Endothelial cell of umbilical vein (primary cell): ENCODE measurements at regions of chr6 and their contacts with region 1.

Region 1: GRCh38 chr6:37819177-37819823 is at the start of gene ZFAND3:
- DNase-seq: peak; percentile 95
- H3K4me3 ChIP-seq: peak within 1 kb of the TSS; percentile 88 to 92 (median 90)
- H3K27ac ChIP-seq: peak within 1 kb of the TSS; percentile 96
- H3K4me1 ChIP-seq: peaks cover 33% of the 10 kb centered on the region
- H3K27me3 ChIP-seq: peaks cover 13 to 23% of the 10 kb centered on the region in 2 experiments
- CTCF ChIP-seq: no peak
- POLR2A ChIP-seq: peak; percentile 65
- total RNA-seq, gene ZFAND3: 54.2 and 55.3 TPM in 2 replicates

Region 2: DNA sequence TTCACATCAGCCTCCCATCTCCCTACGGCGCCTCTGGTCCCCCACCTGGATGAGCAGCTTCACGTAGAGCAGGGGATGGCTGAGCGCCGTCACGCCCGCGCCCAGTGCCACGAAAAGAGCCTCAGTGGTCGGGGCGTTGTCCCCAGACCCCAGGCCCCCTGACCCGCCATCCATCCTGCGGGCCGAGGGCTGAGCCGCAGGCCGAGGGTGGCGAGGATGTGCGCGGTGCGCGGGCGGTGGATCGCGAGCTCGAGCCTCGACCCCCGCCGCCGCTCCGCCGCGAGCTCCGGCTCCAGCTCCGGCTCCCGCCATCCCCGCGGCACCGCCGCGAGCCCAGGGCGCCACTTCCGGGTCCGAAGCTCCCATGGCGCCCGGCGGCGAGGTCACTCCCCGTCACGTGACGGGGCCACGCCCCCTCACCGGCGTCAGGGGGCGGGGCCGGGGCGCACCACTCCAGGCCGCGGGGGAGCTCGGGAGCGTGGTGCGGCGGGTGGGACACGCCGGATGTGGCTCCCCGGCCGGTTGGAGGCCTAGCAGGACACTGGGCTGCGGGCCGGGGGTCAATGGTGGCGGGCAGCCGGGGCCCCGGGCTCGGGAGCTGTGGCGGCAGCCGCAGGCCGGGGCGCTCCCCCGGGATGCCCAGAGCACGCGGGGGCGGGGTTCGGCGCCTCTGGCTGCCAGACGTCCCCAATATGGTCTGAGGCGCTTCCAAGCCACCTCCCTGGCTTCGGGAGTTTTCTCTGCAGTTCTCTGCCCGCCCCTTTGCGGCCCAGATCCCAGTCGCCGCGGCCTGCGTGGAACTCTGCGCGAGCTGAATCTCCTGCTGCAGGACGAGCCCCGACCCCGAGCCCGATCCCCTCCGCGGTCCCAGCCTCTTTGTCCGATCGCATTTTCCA is 833.2 kb before region 1 on chr6 and contains the start of gene MTCH1:
- CTCF ChIA-PET with region 1: no interaction called
- POLR2A ChIA-PET with region 1: no interaction called
- dilution Hi-C with region 1: no loop called
- intact Hi-C with region 1: no loop called
- DNase-seq: peak; percentile 86
- H3K4me3 ChIP-seq: peak within 1 kb of the TSS; percentile 71 to 95 (median 87)
- H3K27ac ChIP-seq: peak within 1 kb of the TSS; percentile 71
- H3K4me1 ChIP-seq: peaks cover 29% of the 10 kb centered on the region
- H3K27me3 ChIP-seq: peaks cover 0 to 5% of the 10 kb centered on the region in 2 experiments
- CTCF ChIP-seq: no peak
- POLR2A ChIP-seq: peak; percentile 97
- total RNA-seq, gene MTCH1: 218 and 226 TPM in 2 replicates

Region 3: GRCh38 chr6:37990762-37991525 is 171.6 kb after region 1 on chr6:
- CTCF ChIA-PET with region 1: no interaction called
- POLR2A ChIA-PET with region 1: interaction called, 3 read pairs
- dilution Hi-C with region 1: no loop called
- intact Hi-C with region 1: loop called (anchors 10 kb)
- DNase-seq: no peak
- H3K4me3 ChIP-seq: no peak overlapping the region
- H3K27ac ChIP-seq: no peak overlapping the region
- H3K4me1 ChIP-seq: no peaks in the 10 kb centered on the region
- H3K27me3 ChIP-seq: no peaks in the 10 kb centered on the region
- CTCF ChIP-seq: no peak
- POLR2A ChIP-seq: no peak

Region 4: GRCh38 chr6:38051819-38052434 is 232.6 kb after region 1 on chr6:
- CTCF ChIA-PET with region 1: no interaction called
- POLR2A ChIA-PET with region 1: no interaction called
- dilution Hi-C with region 1: no loop called
- intact Hi-C with region 1: no loop called
- DNase-seq: no peak
- H3K4me3 ChIP-seq: no peak overlapping the region
- H3K27ac ChIP-seq: no peak overlapping the region
- H3K4me1 ChIP-seq: no peaks in the 10 kb centered on the region
- H3K27me3 ChIP-seq: no peaks in the 10 kb centered on the region
- CTCF ChIP-seq: no peak
- POLR2A ChIP-seq: no peak